ENCODE measurements at regions of chr2 and their contacts with region 1.

Region 1: GRCh38 chr2:171922230-171923022 is at the start of gene HAT1:
- DNase-seq: peak; percentile 98 to 99 (median 98)
- ATAC-seq: peak; percentile 94
- H3K4me3 ChIP-seq: peak within 1 kb of the TSS; percentile 68
- H3K27ac ChIP-seq: peak within 1 kb of the TSS; percentile 97
- H3K4me1 ChIP-seq: peaks cover 13 to 14% of the 10 kb centered on the region in 2 experiments; a peak in 4 of 5 replicates
- H3K27me3 ChIP-seq: no peaks in the 10 kb centered on the region
- CTCF ChIP-seq: 0 out of 6 replicates have a peak, but pooled peaks of 2 of the 3 experiments have one; percentile 3 to 10
- EP300 ChIP-seq: 0 out of 2 replicates have a peak, but pooled peaks have one; percentile 18
- POLR2A ChIP-seq: peak; percentile 93
- RAD21 ChIP-seq: no peak
- polyA plus RNA-seq, gene HAT1: 369 to 384 TPM

Region 2: DNA sequence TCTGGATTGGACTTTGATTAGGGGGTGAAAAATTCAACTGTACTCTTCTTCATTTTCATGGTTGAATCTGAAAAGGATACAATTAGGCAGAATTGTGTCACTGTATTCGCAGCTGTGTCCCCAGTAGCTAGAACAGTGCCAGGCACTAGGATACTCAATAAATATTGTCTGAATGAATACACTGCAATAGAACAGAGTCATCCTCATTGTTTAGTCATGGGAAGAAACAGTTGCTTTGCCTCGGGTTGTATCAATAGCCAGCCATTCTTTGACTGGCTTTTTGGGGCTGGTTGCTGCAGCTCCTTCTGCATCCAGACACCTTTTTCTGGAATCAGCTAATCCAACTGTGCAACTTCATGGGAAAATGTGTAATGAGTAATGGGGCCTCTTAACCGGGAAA is 253.3 kb before region 1 on chr2:
- CTCF ChIA-PET with region 1: no interaction called
- POLR2A ChIA-PET with region 1: no interaction called
- in situ Hi-C with region 1: no loop called
- intact Hi-C with region 1: no loop called
- DNase-seq: no peak
- ATAC-seq: no peak
- H3K4me3 ChIP-seq: no peak overlapping the region
- H3K27ac ChIP-seq: no peak overlapping the region
- H3K4me1 ChIP-seq: no peaks in the 10 kb centered on the region
- H3K27me3 ChIP-seq: peaks cover 10 to 28% of the 10 kb centered on the region in 2 experiments; a peak in 4 of 5 replicates
- CTCF ChIP-seq: no peak
- EP300 ChIP-seq: no peak
- POLR2A ChIP-seq: no peak
- RAD21 ChIP-seq: no peak

Region 3: DNA sequence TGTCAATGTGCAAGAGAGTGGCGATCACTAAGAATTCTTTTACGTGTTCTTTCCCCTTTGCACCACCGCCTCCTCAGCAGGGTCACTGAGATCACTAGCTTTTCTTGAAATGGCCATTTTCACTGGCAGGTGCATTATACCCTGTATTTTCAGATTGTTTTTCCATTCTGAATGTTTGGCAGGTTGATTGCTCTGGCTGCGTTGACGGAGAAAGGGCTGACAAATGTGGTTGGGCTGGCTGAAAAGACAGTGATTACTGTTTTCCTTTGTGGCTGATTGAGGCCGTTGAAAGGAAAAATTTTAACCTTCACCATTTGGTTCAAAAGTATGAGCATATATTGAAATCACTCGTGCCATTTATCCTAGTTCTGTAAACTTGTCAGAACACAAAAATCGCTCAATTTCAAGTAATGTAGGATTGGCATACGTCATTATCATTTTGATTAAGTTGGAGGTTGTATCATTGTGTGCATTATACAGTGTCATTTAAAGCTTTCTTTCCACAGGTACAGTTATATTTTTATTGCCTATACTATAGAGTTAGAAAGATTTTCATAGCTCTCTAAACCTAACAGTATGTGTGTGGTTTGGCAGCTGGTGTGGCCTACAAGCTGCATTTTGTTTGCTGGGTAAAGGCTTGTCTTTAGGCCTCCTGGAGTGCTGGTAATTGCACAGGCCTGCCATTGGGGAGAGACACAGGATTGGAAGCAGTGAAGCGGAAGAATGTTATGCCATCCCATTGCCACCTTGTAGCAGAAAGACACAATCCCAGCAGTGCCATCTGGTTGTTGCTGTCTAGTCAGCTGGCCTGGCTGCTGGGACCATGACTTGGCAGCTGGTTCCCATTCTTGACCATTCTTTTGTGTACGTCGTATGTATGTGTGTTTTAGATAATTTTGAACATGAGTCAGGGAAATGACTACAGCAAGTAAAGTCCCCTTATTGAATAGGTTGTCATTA is 198.4 kb before region 1 on chr2:
- CTCF ChIA-PET with region 1: interaction called, 4 read pairs
- POLR2A ChIA-PET with region 1: interaction called, 3 read pairs
- in situ Hi-C with region 1: no loop called
- intact Hi-C with region 1: loop called (anchors 10 kb)
- DNase-seq: peak in 2 of 4 experiments; percentile 30 to 37
- ATAC-seq: peak; percentile 70
- H3K4me3 ChIP-seq: no peak overlapping the region
- H3K27ac ChIP-seq: no peak overlapping the region
- H3K4me1 ChIP-seq: peaks cover 0 to 4% of the 10 kb centered on the region in 2 experiments; a peak in 3 of 5 replicates
- H3K27me3 ChIP-seq: no peaks in the 10 kb centered on the region
- CTCF ChIP-seq: no peak
- EP300 ChIP-seq: no peak
- POLR2A ChIP-seq: no peak
- RAD21 ChIP-seq: no peak; a peak in 1 of 4 replicates

Region 4: DNA sequence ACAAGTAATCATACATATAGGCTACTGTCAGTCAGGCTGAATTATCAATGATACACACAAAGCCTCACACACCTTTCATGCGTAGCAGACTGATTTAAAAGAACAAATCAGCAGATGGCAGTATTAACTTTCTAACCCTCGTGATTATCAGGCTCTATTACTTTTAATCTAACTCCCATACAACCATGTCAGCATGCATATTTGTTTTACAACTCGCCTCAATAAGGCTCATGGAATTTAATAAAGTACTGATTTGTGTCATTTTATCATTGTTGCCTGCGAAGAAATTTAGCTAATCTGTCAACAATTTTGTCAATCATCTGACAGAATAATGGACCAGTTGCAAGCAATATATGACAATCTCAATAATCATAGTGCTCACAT is 111.2 kb before region 1 on chr2:
- CTCF ChIA-PET with region 1: no interaction called
- POLR2A ChIA-PET with region 1: no interaction called
- in situ Hi-C with region 1: no loop called
- intact Hi-C with region 1: loop called (anchors 5 kb)
- DNase-seq: peak in 1 of 4 experiments; percentile 37
- ATAC-seq: peak; percentile 77
- H3K4me3 ChIP-seq: no peak overlapping the region
- H3K27ac ChIP-seq: no peak overlapping the region
- H3K4me1 ChIP-seq: no peaks in the 10 kb centered on the region
- H3K27me3 ChIP-seq: no peaks in the 10 kb centered on the region
- CTCF ChIP-seq: peak; percentile 45 to 81 (median 56)
- EP300 ChIP-seq: no peak
- POLR2A ChIP-seq: no peak
- RAD21 ChIP-seq: peak; percentile 91 to 97

Region 5: GRCh38 chr2:171878481-171878993 is 43.9 kb before region 1 on chr2:
- CTCF ChIA-PET with region 1: no interaction called
- POLR2A ChIA-PET with region 1: interaction called, 4 read pairs
- in situ Hi-C with region 1: no loop called
- intact Hi-C with region 1: loop called (anchors 5 kb)
- DNase-seq: peak in 2 of 4 experiments; percentile 73 to 77
- ATAC-seq: peak; percentile 95
- H3K4me3 ChIP-seq: no peak overlapping the region
- H3K27ac ChIP-seq: peak overlapping the region; percentile 61
- H3K4me1 ChIP-seq: peaks cover 0 to 15% of the 10 kb centered on the region in 2 experiments; a peak in 3 of 5 replicates
- H3K27me3 ChIP-seq: no peaks in the 10 kb centered on the region
- CTCF ChIP-seq: no peak
- EP300 ChIP-seq: 0 out of 2 replicates have a peak, but pooled peaks have one; percentile 37
- POLR2A ChIP-seq: no peak
- RAD21 ChIP-seq: no peak

Region 6: DNA sequence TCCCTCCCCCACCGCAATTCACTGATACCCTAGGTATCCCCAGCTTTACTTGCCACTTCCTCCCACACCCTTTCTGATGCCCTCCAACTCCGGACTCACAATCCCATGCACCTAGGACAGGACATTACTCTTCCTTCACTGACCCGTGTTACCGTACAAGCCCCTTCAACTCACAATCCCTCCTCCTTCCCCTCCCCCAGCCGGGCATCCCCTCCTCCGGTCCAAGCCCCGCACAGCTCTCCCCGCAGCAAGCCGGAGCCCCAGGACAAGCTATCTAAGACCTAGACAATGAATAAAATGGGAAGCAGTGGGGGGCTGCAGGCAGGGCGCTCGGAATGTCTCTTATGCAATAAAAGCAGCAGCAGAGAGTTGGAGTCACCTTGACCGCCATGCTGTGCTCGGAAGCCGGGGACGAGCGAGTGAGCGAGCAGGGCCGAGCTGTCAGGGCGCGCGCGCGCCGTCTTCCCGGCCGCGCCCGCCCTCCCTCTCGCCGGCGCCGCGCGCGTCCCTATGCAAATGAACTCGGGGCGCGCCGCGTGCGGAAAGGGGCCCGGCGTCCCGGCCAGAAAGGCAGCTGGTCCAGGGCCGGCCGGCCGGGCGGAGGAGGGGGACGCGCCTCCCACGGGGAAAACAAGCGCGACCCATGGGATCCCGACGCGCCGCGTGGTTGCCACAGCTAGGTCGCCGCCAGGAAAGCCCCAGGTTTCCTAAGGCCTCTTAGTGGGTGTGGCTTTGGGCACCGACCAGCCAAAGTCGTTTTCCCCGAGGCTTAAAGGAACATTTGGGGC is 28.4 kb before region 1 on chr2 and contains the start of gene SLC25A12:
- CTCF ChIA-PET with region 1: no interaction called
- POLR2A ChIA-PET with region 1: interaction called, 25 read pairs
- in situ Hi-C with region 1: no loop called
- intact Hi-C with region 1: loop called (anchors 2 kb)
- DNase-seq: peak; percentile 87 to 95 (median 91)
- ATAC-seq: peak; percentile 97
- H3K4me3 ChIP-seq: peak within 1 kb of the TSS; percentile 79
- H3K27ac ChIP-seq: peak within 1 kb of the TSS; percentile 86
- H3K4me1 ChIP-seq: peaks cover 5 to 12% of the 10 kb centered on the region in 2 experiments; a peak in 3 of 5 replicates
- H3K27me3 ChIP-seq: no peaks in the 10 kb centered on the region
- CTCF ChIP-seq: no peak
- EP300 ChIP-seq: no peak
- POLR2A ChIP-seq: peak; percentile 89
- RAD21 ChIP-seq: no peak
- polyA plus RNA-seq, gene SLC25A12: 18.3 to 31.5 TPM

Region 7: DNA sequence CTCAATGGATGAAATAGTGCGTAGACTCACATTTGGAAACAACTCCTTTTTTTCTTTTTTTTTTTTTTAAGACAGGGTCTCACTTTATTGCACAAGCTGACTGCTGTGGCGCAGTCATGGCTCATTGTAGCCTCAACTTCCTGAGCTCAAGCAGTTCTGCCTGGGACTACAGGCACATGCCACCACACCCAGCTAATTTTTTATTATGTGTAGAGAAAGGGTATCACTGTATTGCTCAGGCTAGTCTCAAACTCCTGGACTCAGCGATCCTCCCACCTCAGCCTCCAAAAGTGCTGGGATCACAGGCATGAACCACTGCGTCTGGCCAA is 17.3 kb after region 1 on chr2:
- CTCF ChIA-PET with region 1: no interaction called
- POLR2A ChIA-PET with region 1: interaction called, 62 read pairs
- in situ Hi-C with region 1: no loop called
- intact Hi-C with region 1: no loop called
- DNase-seq: no peak
- ATAC-seq: no peak
- H3K4me3 ChIP-seq: no peak overlapping the region
- H3K27ac ChIP-seq: no peak overlapping the region
- H3K4me1 ChIP-seq: no peaks in the 10 kb centered on the region
- H3K27me3 ChIP-seq: no peaks in the 10 kb centered on the region
- CTCF ChIP-seq: no peak
- EP300 ChIP-seq: no peak
- POLR2A ChIP-seq: no peak
- RAD21 ChIP-seq: no peak

Region 8: DNA sequence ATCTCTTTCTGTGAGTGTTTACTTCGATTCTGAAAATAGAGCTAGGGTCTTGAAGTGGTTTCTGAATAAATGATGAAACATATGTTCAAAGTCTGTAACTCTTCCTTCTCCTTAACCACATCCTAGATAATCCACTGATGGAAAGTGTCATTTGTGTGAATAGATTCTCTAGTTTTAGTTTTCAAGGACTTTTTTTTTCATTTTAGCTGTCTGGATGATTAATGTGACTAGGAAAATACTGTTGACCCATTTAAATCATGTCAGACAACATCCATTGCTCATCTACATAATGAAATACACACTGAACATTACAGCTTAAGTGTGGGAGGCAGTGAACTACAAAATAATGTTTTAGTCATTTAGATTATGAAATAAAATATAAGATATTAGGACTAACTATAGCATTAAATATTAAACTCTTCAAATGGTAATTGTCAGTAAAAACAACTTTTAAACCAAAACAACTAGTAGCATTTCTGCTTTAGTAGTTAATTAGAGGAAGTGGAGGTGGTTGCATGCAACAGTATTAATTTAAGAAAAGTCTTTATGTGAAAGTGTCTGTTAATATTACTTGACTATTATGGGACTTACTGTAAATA is 123.8 kb after region 1 on chr2:
- CTCF ChIA-PET with region 1: no interaction called
- POLR2A ChIA-PET with region 1: interaction called, 4 read pairs
- in situ Hi-C with region 1: no loop called
- intact Hi-C with region 1: loop called (anchors 5 kb)
- DNase-seq: no peak
- ATAC-seq: peak; percentile 52
- H3K4me3 ChIP-seq: no peak overlapping the region
- H3K27ac ChIP-seq: peak overlapping the region; percentile 14; the same call in 2 of the 3 replicates
- H3K4me1 ChIP-seq: peaks cover 3 to 29% of the 10 kb centered on the region in 2 experiments; a peak in 4 of 5 replicates
- H3K27me3 ChIP-seq: no peaks in the 10 kb centered on the region
- CTCF ChIP-seq: no peak
- EP300 ChIP-seq: peak; percentile 91
- POLR2A ChIP-seq: no peak
- RAD21 ChIP-seq: peak; percentile 5 to 31; a peak in 3 of 4 replicates

Region 9: GRCh38 chr2:172072303-172072702 is 149.9 kb after region 1 on chr2:
- CTCF ChIA-PET with region 1: no interaction called
- POLR2A ChIA-PET with region 1: no interaction called
- in situ Hi-C with region 1: no loop called
- intact Hi-C with region 1: no loop called
- DNase-seq: no peak
- ATAC-seq: no peak
- H3K4me3 ChIP-seq: no peak overlapping the region
- H3K27ac ChIP-seq: no peak overlapping the region
- H3K4me1 ChIP-seq: no peaks in the 10 kb centered on the region; a peak in 1 of 5 replicates
- H3K27me3 ChIP-seq: no peaks in the 10 kb centered on the region
- CTCF ChIP-seq: no peak
- EP300 ChIP-seq: no peak
- POLR2A ChIP-seq: no peak
- RAD21 ChIP-seq: no peak

Region 10: GRCh38 chr2:172516299-172516698 is 593.9 kb after region 1 on chr2:
- CTCF ChIA-PET with region 1: no interaction called
- POLR2A ChIA-PET with region 1: no interaction called
- in situ Hi-C with region 1: no loop called
- intact Hi-C with region 1: no loop called
- DNase-seq: no peak
- ATAC-seq: no peak
- H3K4me3 ChIP-seq: no peak overlapping the region
- H3K27ac ChIP-seq: no peak overlapping the region
- H3K4me1 ChIP-seq: peaks cover 5 to 10% of the 10 kb centered on the region in 2 experiments
- H3K27me3 ChIP-seq: no peaks in the 10 kb centered on the region; a peak in 1 of 5 replicates
- CTCF ChIP-seq: no peak
- EP300 ChIP-seq: no peak
- POLR2A ChIP-seq: no peak
- RAD21 ChIP-seq: no peak

Measured in K562 (cell line).